ENCODE measurements at regions of chr15 and their contacts with region 1.

Region 1: DNA sequence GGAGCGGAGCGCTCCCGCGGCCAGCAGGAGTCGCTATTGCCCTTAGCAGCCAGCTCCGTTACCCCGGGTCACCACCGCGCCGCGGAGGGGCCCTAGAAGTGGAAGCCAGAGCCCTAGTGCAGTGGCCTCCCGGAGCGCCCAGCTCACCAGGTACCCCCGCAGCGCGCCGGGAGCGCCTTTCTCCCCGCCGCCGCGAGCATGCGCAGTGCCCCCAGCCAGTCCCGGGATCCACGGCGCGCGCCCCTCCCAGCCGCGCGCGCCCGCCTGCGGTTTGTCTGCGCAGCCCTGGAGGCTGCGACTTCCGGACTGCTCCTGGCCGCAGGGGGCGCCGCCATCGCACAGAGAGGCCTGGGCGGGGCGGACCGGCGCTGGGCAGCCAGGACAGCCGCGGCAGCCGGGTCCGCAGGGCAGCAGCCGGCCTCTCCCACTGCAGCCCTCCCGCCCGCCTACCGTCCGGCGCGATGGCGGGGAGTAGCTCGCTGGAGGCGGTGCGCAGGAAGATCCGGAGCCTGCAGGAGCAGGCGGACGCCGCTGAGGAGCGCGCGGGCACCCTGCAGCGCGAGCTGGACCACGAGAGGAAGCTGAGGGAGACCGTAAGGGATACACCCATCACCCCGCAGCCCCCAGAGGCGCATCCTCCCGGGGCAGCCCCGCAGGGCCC is 5.7 kb downstream of the TPM1 start:
- DNase-seq: peak; percentile 89
- H3K4me3 Mint-ChIP-seq: peak overlapping the region; percentile 91
- H3K27ac Mint-ChIP-seq: no peak overlapping the region
- H3K4me1 Mint-ChIP-seq: peaks cover 13% of the 10 kb centered on the region
- H3K27me3 Mint-ChIP-seq: peaks cover 33% of the 10 kb centered on the region

Region 2: DNA sequence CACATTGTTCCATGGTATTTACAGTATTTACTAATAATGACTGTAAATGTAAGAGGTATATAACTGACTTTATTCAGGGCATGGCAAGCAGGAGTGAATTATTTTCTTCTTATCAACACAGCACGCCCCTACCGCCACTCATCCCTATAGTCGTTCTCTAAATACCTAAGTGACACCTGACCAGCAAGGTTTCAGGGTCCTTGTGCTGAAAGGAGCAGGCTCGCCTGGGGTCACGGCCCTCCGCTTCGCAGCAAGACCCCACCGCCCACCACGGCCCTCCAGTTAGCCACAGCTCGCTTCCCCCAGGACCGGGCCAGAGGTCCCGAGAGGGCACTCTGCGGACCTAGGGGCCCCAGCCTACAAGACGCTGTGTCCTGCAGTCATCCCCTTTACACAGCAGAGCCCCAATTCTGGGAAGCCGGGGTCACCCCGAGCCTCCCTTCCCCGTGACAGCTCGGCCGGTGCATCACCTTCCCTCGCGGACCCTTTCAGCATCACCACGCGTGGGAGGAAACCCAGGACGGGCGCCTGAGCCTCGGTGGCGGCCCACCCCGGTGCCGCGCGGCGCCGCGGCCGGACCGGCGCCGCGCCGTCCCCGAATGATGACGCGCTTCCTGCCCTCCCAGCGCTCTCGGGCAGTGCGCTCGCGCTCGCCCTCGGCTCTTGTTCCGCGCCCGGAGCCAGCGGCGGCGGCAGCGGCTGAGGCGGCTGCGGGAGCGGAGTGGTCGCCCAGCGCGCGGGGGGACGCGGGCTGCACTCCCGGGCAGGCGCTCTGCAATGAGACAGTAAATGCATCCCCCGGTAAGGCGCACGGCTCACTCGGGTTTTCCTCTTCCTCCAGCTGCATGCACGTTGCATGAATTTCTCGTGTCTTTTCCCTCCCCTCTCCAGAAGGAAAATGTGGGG is 658.1 kb before region 1 on chr15:
- CTCF ChIA-PET with region 1: no interaction called
- POLR2A ChIA-PET with region 1: no interaction called
- intact Hi-C with region 1: loop called (anchors 2 kb)
- DNase-seq: peak; percentile 73
- H3K4me3 Mint-ChIP-seq: peak within 1 kb of the TSS; percentile 92
- H3K27ac Mint-ChIP-seq: peak within 1 kb of the TSS; percentile 72
- H3K4me1 Mint-ChIP-seq: peaks cover 14% of the 10 kb centered on the region
- H3K27me3 Mint-ChIP-seq: peaks cover 22% of the 10 kb centered on the region

Region 3: GRCh38 chr15:62770752-62771151 is 277.5 kb before region 1 on chr15:
- CTCF ChIA-PET with region 1: no interaction called
- POLR2A ChIA-PET with region 1: no interaction called
- intact Hi-C with region 1: no loop called
- DNase-seq: no peak
- H3K4me3 Mint-ChIP-seq: no peak overlapping the region
- H3K27ac Mint-ChIP-seq: no peak overlapping the region
- H3K4me1 Mint-ChIP-seq: no peaks in the 10 kb centered on the region
- H3K27me3 Mint-ChIP-seq: no peaks in the 10 kb centered on the region

Region 4: DNA sequence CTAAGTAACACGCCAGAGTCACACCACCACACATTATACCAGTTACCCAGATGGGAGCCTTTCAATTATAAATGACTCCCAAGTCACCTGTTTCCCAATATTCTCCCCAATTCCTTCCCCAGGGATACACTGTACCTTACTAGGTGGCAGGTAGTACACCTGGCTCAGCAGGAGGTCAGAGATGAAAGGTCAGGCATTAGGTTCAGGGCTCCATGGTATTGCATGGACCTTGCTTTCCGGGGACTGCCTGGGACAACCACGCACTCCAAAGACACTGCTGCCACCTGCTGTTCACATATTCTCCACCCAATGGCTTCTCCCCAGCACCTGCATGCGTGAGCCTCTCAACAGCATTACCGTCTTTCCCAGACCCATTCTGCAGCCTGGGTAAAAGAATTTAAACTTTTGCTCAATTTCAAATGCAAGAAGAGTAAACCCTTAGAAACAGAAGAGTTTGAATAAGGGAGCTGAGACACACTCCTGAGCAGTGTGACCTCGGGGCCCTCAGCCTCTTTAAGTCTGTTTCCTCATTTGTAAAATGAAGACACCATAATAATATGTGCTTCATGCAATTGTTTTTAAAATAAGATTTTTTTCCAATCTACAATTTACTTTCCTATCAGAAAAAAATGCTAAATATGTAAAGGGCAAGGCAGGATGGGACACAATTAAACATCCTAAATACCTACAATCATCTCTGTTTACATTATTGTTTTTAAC is 45.4 kb after region 1 on chr15:
- CTCF ChIA-PET with region 1: interaction called, 154 read pairs
- POLR2A ChIA-PET with region 1: no interaction called
- intact Hi-C with region 1: loop called (anchors 1 kb)
- DNase-seq: peak; percentile 83
- H3K4me3 Mint-ChIP-seq: no peak overlapping the region
- H3K27ac Mint-ChIP-seq: no peak overlapping the region
- H3K4me1 Mint-ChIP-seq: no peaks in the 10 kb centered on the region
- H3K27me3 Mint-ChIP-seq: no peaks in the 10 kb centered on the region

Region 5: GRCh38 chr15:63122002-63122893 is 74.0 kb after region 1 on chr15:
- CTCF ChIA-PET with region 1: no interaction called
- POLR2A ChIA-PET with region 1: no interaction called
- intact Hi-C with region 1: loop called (anchors 2 kb)
- DNase-seq: peak; percentile 95
- H3K4me3 Mint-ChIP-seq: peak overlapping the region; percentile 89
- H3K27ac Mint-ChIP-seq: peak overlapping the region; percentile 78
- H3K4me1 Mint-ChIP-seq: peaks cover 14% of the 10 kb centered on the region
- H3K27me3 Mint-ChIP-seq: no peaks in the 10 kb centered on the region

Region 6: GRCh38 chr15:63288778-63289378 is 240.6 kb after region 1 on chr15:
- CTCF ChIA-PET with region 1: interaction called, 14 read pairs
- POLR2A ChIA-PET with region 1: no interaction called
- intact Hi-C with region 1: no loop called
- DNase-seq: no peak
- H3K4me3 Mint-ChIP-seq: no peak overlapping the region
- H3K27ac Mint-ChIP-seq: no peak overlapping the region
- H3K4me1 Mint-ChIP-seq: peaks cover 7% of the 10 kb centered on the region
- H3K27me3 Mint-ChIP-seq: no peaks in the 10 kb centered on the region